B cell (primary cell): ENCODE measurements at regions of chr19 and their contacts with region 1.

Region 1: DNA sequence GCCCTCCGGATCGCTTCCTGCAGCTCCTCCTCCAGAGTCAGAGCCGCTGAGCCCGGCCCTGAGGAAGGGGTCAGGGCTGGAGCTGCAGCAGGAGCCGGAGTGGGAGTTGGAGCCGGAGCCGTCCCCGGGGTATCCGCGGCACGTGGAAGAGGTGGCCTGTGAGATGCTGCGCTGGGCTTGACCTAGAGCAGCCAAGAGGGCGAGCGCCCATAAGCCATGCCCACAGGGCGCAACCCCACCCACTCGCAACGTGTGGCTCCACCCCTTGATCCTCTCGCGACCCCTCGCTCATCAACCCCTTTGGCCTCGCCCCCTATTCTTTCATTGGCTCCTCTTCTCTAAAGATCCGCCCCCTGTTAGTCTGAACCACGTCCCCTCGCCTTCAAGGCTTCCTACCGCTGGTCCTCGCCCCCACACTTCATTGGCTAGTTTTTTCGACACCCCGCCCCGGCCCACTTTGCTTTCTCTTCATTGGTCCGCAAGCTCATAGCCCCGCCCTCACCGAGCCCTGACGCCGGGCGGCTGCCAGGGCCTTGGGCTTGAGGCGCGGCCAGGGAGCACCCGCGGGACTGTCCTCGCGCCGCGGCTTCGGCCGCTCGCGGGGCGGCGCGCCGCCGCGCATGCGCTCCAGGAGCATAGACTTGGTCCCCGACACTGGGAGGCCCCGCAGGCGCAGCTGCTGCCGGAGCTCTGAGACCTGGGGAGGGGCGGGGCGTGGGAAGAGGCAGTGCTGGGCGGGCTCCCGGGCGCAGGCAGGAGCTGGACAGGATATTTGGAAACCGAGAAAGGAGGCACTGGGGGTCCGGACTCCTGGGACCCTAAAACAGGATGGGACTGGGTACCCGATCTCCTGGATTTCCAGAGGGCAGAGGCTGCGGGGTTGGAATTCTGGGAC is 5.4 kb downstream of the MAMSTR start:
- DNase-seq: peak; percentile 99
- ATAC-seq: peak; percentile 90
- H3K4me3 ChIP-seq: peak overlapping the region; percentile 39 to 86 (median 74)
- H3K4me3 Mint-ChIP-seq: peak overlapping the region; percentile 89
- H3K27ac ChIP-seq: peak overlapping the region; percentile 67 to 76
- H3K27ac Mint-ChIP-seq: peak overlapping the region; percentile 82
- H3K4me1 ChIP-seq: peaks cover 14 to 22% of the 10 kb centered on the region in 2 donors
- H3K4me1 Mint-ChIP-seq: peaks cover 21% of the 10 kb centered on the region
- H3K27me3 ChIP-seq: no peaks in the 10 kb centered on the region
- H3K27me3 Mint-ChIP-seq: no peaks in the 10 kb centered on the region
- CTCF ChIP-seq: no peak

Region 2: GRCh38 chr19:48660854-48661731 is 53.0 kb before region 1 on chr19:
- CTCF ChIA-PET with region 1: no interaction called
- POLR2A ChIA-PET with region 1: no interaction called
- intact Hi-C with region 1: loop called (anchors 1 kb)
- DNase-seq: peak; percentile 94
- ATAC-seq: peak; percentile 93
- H3K4me3 ChIP-seq: peak overlapping the region in 4 of 5 experiments; percentile 30 to 56 (median 52)
- H3K4me3 Mint-ChIP-seq: peak overlapping the region; percentile 88
- H3K27ac ChIP-seq: peak overlapping the region; percentile 96 to 97
- H3K27ac Mint-ChIP-seq: peak overlapping the region; percentile 97
- H3K4me1 ChIP-seq: peaks cover 8 to 19% of the 10 kb centered on the region in 2 donors
- H3K4me1 Mint-ChIP-seq: peaks cover 16% of the 10 kb centered on the region
- H3K27me3 ChIP-seq: no peaks in the 10 kb centered on the region
- H3K27me3 Mint-ChIP-seq: no peaks in the 10 kb centered on the region
- CTCF ChIP-seq: no peak

Region 3: DNA sequence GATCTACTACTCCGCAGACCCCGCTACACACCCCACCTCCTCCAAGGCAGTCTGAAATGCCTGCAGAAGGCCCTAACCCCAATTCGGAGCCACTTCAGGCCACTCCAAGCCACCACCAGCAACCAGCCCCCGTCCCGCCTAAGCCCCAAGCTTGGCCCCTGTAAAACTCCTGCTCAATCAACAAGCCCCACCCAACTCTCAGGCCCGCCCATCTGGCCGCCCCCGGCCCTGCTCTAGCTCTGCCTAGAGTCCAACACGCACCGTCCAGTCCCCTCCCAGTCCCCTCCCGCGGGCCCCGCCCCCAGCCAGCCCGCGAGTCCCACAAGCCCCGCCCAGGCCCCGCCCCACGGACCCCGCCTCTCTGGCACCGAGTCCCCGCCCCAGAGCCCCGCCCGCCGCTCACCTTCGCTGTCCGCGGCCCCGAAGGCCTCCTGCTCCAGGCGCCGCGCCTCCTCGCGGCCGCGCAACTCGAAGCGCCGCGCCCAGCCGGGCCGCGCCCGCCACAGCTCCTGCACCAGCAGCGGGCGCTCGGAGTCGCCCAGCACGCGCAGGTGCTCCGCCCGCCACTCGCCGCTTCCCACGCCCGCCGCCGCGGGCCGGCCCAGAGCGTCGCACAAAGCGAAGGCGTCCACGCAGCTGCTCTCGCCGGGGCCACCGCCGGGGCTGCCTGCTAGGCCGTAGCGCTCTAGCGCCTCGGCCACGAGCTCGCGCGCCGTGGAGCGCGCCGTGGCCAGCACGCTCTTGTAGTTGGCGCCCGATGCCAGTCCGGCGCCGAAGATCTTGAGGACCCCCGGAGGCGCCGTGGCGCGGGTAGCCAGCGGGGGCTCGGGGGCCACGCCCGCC is 24.7 kb after region 1 on chr19:
- CTCF ChIA-PET with region 1: interaction called, 5 read pairs
- POLR2A ChIA-PET with region 1: no interaction called
- intact Hi-C with region 1: loop called (anchors 1 kb)
- DNase-seq: peak; percentile 91
- ATAC-seq: peak; percentile 93
- H3K4me3 ChIP-seq: peak overlapping the region in 3 of 5 experiments; percentile 48 to 65 (median 54)
- H3K4me3 Mint-ChIP-seq: peak overlapping the region; percentile 63
- H3K27ac ChIP-seq: no peak overlapping the region
- H3K27ac Mint-ChIP-seq: peak overlapping the region; percentile 67
- H3K4me1 ChIP-seq: peaks cover 22 to 25% of the 10 kb centered on the region in 2 donors
- H3K4me1 Mint-ChIP-seq: peaks cover 15% of the 10 kb centered on the region
- H3K27me3 ChIP-seq: peaks cover 0 to 26% (median 10%) of the 10 kb centered on the region in 4 experiments
- H3K27me3 Mint-ChIP-seq: peaks cover 15% of the 10 kb centered on the region
- CTCF ChIP-seq: peak; percentile 54

Region 4: GRCh38 chr19:48746738-48747575 is 32.8 kb after region 1 on chr19 and contains the start of gene IZUMO1:
- CTCF ChIA-PET with region 1: no interaction called
- POLR2A ChIA-PET with region 1: no interaction called
- intact Hi-C with region 1: loop called (anchors 1 kb)
- DNase-seq: peak; percentile 64
- ATAC-seq: peak; percentile 72
- H3K4me3 ChIP-seq: peak within 1 kb of the TSS in 2 of 5 experiments; percentile 19 to 20
- H3K4me3 Mint-ChIP-seq: no peak within 1 kb of the TSS
- H3K27ac ChIP-seq: no peak within 1 kb of the TSS
- H3K27ac Mint-ChIP-seq: peak within 1 kb of the TSS; percentile 10
- H3K4me1 ChIP-seq: peaks cover 11 to 14% of the 10 kb centered on the region in 2 donors
- H3K4me1 Mint-ChIP-seq: peaks cover 14% of the 10 kb centered on the region
- H3K27me3 ChIP-seq: peaks cover 0 to 57% (median 19%) of the 10 kb centered on the region in 4 experiments
- H3K27me3 Mint-ChIP-seq: peaks cover 33% of the 10 kb centered on the region
- CTCF ChIP-seq: no peak
- total RNA-seq, gene IZUMO1: not detected in 2 replicates

Region 5: GRCh38 chr19:48899781-48900476 is 185.8 kb after region 1 on chr19 and contains the start of gene NUCB1:
- CTCF ChIA-PET with region 1: no interaction called
- POLR2A ChIA-PET with region 1: no interaction called
- intact Hi-C with region 1: loop called (anchors 1 kb)
- DNase-seq: peak; percentile 96
- ATAC-seq: peak; percentile 99
- H3K4me3 ChIP-seq: peak within 1 kb of the TSS; percentile 62 to 95 (median 82)
- H3K4me3 Mint-ChIP-seq: peak within 1 kb of the TSS; percentile 96
- H3K27ac ChIP-seq: peak within 1 kb of the TSS; percentile 61 to 83
- H3K27ac Mint-ChIP-seq: peak within 1 kb of the TSS; percentile 91
- H3K4me1 ChIP-seq: peaks cover 18 to 35% of the 10 kb centered on the region in 2 donors
- H3K4me1 Mint-ChIP-seq: peaks cover 31% of the 10 kb centered on the region
- H3K27me3 ChIP-seq: peaks cover 0 to 25% (median 6%) of the 10 kb centered on the region in 4 experiments
- H3K27me3 Mint-ChIP-seq: peaks cover 11% of the 10 kb centered on the region
- CTCF ChIP-seq: no peak
- total RNA-seq, gene NUCB1: 134 and 136 TPM in 2 replicates